ENCODE measurements at regions of chr2 and their contacts with region 1.

Region 1: DNA sequence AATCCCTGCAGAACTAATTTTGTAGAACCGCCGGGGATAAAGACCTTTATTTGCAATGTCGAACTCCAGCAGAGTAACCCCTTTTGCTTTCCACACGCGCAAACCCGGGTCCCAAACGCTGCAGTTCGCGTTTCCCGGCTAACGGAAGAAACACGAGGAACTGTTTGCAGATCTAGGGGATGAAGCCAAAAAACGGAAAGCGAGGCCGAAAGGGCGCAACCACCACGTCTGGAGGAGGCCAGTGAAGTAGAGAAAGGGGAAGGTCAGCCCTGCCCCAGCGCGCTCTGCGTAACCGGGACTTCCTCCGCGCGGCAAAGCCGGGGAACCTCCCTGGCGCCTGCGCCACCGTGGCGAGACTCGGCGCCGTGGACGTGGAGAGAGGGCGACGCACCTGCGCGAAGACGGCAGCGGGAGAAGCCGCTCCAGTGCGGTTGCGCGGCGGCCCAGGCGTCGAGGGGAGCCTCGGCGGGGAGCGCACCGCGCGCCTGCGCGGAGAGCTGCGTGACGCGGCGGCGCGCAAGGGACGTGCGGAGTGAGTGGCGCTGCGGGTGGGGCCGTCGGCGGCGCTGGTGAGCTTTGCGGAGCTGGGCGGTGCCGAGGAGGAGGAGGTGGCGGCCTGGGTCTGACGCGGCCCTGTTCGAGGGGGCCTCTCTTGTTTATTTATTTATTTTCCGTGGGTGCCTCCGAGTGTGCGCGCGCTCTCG is at the start of gene PPP1CB:
- DNase-seq: peak; percentile 85 to 98 (median 95)
- H3K4me3 ChIP-seq: peak within 1 kb of the TSS; percentile 59 to 99 (median 95)
- H3K27ac ChIP-seq: peak within 1 kb of the TSS; percentile 89 to 100 (median 99)
- H3K27me3 ChIP-seq: no peaks in the 10 kb centered on the region
- CTCF ChIP-seq: peak in 48 of 56 donors; percentile 11 to 69 (median 38)
- total RNA-seq, gene PPP1CB: 152 to 296 (median 223) TPM

Region 2: GRCh38 chr2:28566521-28567041 is 184.8 kb before region 1 on chr2:
- intact Hi-C with region 1: loop called (anchors 1 to 2 kb)
- DNase-seq: peak; percentile 66 to 89 (median 79)
- H3K4me3 ChIP-seq: peak overlapping the region; percentile 36 to 88 (median 71)
- H3K27ac ChIP-seq: peak overlapping the region in 57 of 59 donors; percentile 52 to 94 (median 84)
- H3K27me3 ChIP-seq: no peaks in the 10 kb centered on the region
- CTCF ChIP-seq: peak; percentile 92 to 100 (median 98)

Region 3: DNA sequence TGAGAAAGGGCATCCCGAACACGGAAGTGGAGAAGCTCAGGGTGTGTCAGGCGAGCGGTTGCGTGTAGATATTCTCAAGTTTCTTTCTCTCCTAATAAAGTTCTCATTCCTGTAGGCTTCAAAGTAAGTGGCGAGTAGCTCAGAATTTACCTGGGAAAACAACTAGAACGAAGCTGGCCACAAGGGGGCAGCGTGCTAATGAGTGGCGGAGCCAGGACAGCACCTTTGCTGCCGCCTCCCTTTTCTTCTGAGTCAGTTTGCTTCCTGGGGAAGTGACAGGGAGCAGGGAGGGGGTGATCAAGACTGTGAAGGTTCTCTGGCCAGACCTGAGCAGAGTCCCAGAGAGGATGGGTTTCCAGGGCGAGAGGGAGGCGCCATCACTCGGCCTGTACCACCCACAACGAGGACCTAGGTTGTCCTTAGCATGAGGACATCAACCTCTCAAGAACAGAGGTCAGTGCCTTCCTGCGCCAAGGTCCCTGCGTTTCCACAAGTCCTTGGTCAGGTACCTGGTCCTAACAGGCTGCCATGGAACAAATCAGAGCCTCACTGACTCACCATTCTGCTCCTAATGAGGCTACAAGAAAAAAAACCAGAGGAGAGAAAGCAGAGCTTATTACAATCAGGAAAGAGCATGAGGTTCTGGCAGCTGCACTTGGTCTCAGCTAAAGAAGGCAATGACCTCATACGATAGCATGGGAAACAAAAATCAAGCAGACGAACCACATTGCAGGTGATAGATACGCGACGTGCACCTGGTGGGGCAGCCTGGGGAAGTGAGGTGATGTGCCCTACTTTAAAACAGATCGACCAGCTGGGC is 156.9 kb before region 1 on chr2:
- intact Hi-C with region 1: loop called (anchors 2 to 5 kb)
- DNase-seq: peak; percentile 72 to 88 (median 84)
- H3K4me3 ChIP-seq: peak overlapping the region in 34 of 59 donors; percentile 0 to 46 (median 20)
- H3K27ac ChIP-seq: peak overlapping the region in 32 of 59 donors; percentile 2 to 80 (median 56)
- H3K27me3 ChIP-seq: no peaks in the 10 kb centered on the region
- CTCF ChIP-seq: peak; percentile 76 to 93 (median 86)

Region 4: DNA sequence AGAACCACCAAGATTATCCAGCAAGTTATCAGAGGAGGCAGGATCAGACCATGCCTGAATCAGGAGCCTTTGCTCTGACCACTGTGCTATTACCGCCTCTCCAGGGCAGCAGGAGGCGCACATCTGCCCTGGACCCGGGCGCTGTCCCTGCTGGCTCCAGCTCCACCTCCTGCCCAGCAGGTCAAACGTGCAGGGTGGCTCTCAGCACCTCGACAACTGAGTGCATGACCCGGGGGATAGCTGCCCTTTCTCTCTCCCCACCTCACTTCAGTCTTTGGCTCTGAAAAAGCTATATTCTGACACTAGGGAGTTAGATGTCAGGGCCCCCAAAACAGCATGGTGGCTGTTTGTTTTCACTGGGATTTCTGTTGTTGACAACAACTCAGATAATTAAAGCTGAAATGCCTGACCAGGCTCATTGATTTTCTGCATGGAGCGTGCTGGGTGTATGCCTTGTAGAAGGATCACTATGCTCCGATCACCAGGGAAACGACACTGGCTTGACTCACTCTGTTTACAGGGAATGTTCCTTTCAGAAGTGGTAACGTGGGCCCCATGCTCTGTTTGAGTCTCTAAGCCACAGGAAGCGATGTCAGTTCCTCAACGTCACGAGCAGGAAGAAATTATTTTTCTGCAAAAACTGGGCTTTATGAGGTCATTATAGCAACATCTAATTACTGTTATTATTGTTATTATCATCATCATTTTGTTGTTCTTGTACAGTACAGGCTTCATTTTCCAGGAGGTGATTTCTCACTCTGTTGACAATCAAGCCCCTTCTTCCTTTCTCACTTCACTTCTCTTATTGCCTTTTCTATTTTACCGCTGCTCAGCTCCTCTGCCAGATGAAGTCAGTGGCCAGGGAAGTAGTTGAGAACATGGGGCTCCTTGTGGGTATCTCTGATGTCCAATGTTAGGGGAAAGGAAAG is 130.0 kb before region 1 on chr2:
- intact Hi-C with region 1: loop called in 1 of 2 experiments (anchors 10 kb)
- DNase-seq: peak in 6 of 10 donors; percentile 44 to 86 (median 68)
- H3K4me3 ChIP-seq: peak overlapping the region in 16 of 59 donors; percentile 1 to 38 (median 14)
- H3K27ac ChIP-seq: peak overlapping the region in 58 of 59 donors; percentile 19 to 94 (median 83)
- H3K27me3 ChIP-seq: no peaks in the 10 kb centered on the region
- CTCF ChIP-seq: peak in 18 of 56 donors; percentile 5 to 32 (median 20)

Region 5: DNA sequence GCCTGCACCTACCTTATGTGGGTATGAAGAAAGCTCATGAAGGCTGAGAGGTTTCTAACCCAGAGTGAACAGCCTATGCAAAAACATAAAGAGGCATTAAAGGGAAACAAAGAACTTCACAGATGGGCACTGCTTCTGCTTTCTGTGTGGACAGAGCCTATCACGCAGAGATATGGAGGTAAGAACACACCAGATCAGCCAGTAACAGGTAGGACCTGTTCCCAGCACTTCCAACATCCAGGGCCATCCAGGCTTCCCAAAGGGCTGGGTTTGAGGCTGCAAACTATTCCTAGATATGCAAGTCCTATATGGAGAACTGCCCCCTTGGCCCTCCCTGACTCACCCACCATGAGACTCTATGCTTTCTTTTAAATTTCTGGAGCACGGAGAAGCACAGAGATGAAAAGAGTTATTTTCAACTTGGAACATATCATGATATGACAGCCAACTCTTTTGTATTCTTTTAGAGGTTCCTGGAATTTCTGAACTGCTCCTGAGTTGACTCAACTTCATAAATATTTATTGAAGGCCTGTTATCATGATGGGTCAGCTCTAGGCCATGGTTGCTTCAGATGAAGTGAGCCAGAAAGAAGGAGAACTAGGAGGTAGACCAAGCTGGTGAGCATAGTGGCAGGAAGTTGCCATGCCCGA is 77.2 kb before region 1 on chr2:
- intact Hi-C with region 1: no loop called
- DNase-seq: no peak
- H3K4me3 ChIP-seq: no peak overlapping the region
- H3K27ac ChIP-seq: peak overlapping the region in 5 of 59 donors; percentile 8 to 52 (median 29)
- H3K27me3 ChIP-seq: no peaks in the 10 kb centered on the region
- CTCF ChIP-seq: no peak

Region 6: DNA sequence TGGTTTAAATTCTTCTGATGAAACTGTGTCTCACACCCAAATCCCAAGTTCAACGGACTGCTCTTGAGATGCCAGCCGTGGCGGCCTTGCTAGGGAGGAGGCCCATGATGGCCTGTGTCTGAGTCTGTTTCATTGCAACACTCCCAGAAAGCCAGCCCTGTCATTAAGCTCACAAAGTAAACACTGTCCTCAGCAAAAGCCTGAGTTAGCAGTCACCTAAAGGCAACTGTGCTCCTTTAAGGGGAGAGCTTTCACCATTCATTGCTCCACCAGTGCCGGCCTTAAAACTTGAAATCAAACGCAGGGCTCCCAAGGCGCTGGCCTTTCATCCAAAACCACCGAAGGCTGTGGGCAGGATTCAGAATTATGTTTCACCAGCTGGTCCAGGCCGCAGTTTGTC is 42.3 kb before region 1 on chr2:
- intact Hi-C with region 1: loop called in 1 of 2 experiments (anchors 5 kb)
- DNase-seq: no peak
- H3K4me3 ChIP-seq: no peak overlapping the region
- H3K27ac ChIP-seq: peak overlapping the region in 35 of 59 donors; percentile 3 to 84 (median 60)
- H3K27me3 ChIP-seq: no peaks in the 10 kb centered on the region
- CTCF ChIP-seq: no peak

Region 7: GRCh38 chr2:28821295-28821958 is 70.0 kb after region 1 on chr2:
- intact Hi-C with region 1: no loop called
- DNase-seq: peak in 2 of 10 donors; percentile 11 to 26
- H3K4me3 ChIP-seq: no peak overlapping the region
- H3K27ac ChIP-seq: no peak overlapping the region
- H3K27me3 ChIP-seq: no peaks in the 10 kb centered on the region
- CTCF ChIP-seq: peak; percentile 51 to 84 (median 69)

Region 8: DNA sequence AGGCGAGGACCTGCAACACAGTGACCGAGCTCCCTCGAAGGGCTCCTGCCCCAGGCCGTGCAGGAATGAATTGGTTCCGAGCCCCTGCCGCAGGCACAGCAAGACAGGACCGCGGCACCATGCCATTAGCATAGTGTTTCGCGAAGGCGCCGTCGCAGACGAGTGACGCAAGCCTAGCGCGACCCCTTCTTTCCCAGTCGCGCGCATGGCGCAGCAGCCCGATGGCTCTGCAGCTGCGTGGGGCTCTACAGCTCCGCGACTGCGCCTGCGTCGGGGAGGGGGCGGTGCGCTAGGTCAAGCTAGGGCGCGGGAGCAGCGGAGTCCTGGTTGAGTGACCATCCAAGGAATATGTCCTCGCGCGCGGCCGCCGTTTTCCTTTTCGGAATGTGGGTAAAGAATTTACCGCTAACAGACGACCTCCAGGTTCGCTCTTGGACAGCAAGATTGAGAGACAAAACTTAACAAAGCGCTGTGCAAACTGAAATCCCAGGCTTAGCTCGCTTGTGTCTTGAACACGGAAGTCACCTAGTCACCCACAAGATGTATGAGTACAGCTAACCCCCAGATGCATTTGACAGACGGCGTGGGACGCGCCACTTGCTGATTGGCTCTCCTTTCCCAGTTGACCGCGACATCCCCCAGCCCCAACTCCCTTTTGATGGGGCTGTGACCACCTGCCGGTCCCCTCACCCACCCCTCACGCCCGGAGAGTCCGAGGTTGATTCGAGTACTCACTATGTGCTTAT is 118.9 kb after region 1 on chr2 and contains the start of gene TRMT61B:
- intact Hi-C with region 1: loop called in 1 of 2 experiments (anchors 5 kb)
- DNase-seq: peak; percentile 91 to 98 (median 96)
- H3K4me3 ChIP-seq: peak within 1 kb of the TSS; percentile 62 to 100 (median 93)
- H3K27ac ChIP-seq: peak within 1 kb of the TSS in 51 of 59 donors; percentile 1 to 91 (median 68)
- H3K27me3 ChIP-seq: no peaks in the 10 kb centered on the region
- CTCF ChIP-seq: peak in 38 of 56 donors; percentile 5 to 58 (median 36)
- total RNA-seq, gene TRMT61B: 15.0 to 32.6 (median 21.0) TPM

Region 9: DNA sequence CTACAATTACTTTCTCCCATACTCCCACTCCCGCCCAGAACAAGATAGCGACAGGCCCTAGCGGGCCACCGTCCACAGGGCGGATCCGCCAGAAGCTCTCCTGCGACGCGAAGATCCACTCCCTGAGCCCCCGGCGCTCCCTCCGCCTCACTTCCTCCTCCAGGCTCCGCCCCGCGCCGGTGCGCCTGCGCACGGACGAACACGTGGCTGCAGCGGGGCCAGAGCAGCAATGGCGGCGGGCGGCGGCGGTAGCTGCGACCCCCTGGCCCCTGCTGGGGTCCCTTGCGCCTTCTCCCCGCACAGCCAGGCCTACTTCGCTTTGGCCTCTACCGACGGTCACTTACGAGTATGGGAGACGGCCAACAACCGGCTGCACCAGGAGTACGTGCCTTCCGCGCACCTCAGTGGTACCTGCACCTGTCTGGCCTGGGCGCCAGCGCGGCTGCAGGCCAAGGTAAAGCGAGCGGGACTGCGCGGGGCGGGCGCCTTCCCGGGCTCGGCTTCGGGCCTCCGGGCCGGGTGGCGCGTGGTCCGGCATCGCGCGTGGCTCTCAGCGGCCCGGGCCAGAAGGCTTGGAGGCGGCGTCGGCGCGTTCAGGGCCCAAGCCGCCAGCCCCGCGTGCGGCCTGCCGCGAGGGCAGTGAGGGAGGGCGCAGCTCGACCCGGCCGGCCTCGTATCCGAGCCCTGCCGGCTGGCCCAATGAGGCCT is 143.2 kb after region 1 on chr2 and contains the start of gene WDR43:
- intact Hi-C with region 1: loop called in 1 of 2 experiments (anchors 5 kb)
- DNase-seq: peak; percentile 94 to 99 (median 96)
- H3K4me3 ChIP-seq: peak within 1 kb of the TSS; percentile 68 to 100 (median 99)
- H3K27ac ChIP-seq: peak within 1 kb of the TSS in 46 of 59 donors; percentile 2 to 88 (median 66)
- H3K27me3 ChIP-seq: no peaks in the 10 kb centered on the region
- CTCF ChIP-seq: peak in 28 of 56 donors; percentile 7 to 49 (median 26)
- total RNA-seq, gene WDR43: 20.4 to 54.5 (median 32.7) TPM

Region 10: DNA sequence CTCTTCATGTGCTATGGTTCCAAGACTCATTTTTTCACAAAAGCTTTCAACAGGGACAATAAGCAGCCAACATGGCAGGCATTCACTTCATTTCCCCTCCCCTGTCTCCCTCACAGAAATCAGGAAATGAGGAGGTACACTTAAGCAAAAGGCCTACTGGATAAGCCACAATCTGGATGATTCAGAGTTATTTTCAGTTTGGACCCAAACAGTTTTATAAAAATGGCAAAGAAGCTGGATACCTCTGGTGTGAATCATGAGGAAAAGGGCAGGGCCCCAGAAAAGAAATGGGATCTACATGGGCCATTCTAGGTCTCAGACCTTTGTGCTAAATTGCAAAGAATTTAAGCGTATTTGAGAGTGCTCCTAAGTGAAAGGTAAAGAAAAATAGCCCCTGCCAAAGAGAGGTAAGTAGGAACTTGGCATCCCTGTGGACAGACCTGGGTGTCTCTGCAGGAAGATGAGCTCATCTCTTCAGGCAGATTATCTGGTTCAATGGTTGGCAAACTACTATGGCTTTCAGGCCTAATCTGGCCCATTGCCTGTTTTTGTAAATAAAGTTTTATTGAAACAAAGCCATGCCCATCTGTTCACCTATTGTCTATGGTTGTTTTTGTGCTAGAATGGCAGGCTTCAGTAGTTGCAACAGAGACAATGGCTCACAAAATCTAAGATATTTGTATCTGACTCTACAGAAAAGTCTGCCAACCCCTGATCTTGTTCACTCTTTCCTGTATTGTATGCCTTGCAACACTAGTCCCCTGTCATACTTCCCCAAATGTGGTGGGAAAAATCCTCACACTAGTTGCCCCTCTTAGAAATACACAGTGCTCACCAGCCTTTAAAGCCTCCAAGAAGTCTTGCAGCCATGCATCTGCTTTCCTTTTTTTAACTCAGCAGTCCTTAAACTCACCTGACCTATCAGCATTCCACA is 855.0 kb after region 1 on chr2:
- intact Hi-C with region 1: no loop called
- DNase-seq: no peak
- H3K4me3 ChIP-seq: no peak overlapping the region
- H3K27ac ChIP-seq: no peak overlapping the region
- H3K27me3 ChIP-seq: peaks cover 0 to 35% (median 0%) of the 10 kb centered on the region in 45 donors
- CTCF ChIP-seq: no peak

Region 11: GRCh38 chr2:29753671-29754444 is 1002.5 kb after region 1 on chr2:
- intact Hi-C with region 1: no loop called
- DNase-seq: no peak
- H3K4me3 ChIP-seq: no peak overlapping the region
- H3K27ac ChIP-seq: no peak overlapping the region
- H3K27me3 ChIP-seq: peaks cover 0 to 12% (median 0%) of the 10 kb centered on the region in 45 donors
- CTCF ChIP-seq: no peak

Measured in dorsolateral prefrontal cortex (tissue), 120 donors.